WTC11 (cell line): ENCODE measurements at regions of chr16 and their contacts with region 1.

Region 1: GRCh38 chr16:20300312-20301097 is 26.8 kb downstream of the GP2 start:
- DNase-seq: peak; percentile 64
- ATAC-seq: peak; percentile 97
- H3K4me3 Mint-ChIP-seq: no peak overlapping the region
- H3K27ac Mint-ChIP-seq: no peak overlapping the region
- H3K4me1 Mint-ChIP-seq: 0 out of 2 replicates have a peak, but pooled peaks cover 3% of the 10 kb centered on the region
- H3K27me3 Mint-ChIP-seq: no peaks in the 10 kb centered on the region
- CTCF ChIP-seq: peak; percentile 66

Region 2: DNA sequence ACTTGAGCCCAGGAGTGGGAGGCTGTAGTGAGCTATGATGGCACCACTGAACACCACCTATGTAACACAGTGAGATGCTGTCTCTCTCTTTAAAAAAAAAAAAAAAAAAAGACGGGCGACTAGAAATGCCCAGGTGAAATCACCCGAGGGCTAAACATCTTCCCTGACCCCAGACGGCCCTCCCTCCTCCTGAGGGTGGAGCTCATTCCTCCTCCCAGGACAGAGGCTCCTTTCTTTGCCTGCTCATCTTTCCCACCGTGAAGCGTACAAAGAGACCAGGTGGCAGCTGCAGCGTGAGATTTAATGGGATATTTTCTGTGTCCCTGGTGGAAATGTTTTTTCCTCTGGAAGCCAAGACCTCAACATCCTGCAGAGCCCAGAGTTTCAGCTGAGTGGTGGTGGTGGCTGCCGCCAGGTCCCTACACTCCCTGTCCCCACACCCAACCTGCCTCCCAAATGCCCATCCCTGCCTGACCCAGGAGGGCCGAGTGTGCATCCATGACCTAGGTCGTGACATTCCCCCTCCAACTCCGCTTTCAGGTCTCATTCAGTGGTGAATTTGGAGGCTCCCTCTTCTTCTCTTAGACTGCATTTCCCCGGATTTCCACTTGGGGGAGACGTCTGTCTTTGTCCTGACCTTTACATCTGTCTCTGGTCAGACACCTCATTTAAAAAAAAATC is 401.4 kb before region 1 on chr16:
- CTCF ChIA-PET with region 1: interaction called, 20 read pairs
- POLR2A ChIA-PET with region 1: no interaction called
- DNase-seq: peak; percentile 75
- ATAC-seq: peak; percentile 79
- H3K4me3 Mint-ChIP-seq: peak overlapping the region; percentile 45
- H3K27ac Mint-ChIP-seq: no peak overlapping the region
- H3K4me1 Mint-ChIP-seq: peaks cover 16% of the 10 kb centered on the region
- H3K27me3 Mint-ChIP-seq: no peaks in the 10 kb centered on the region
- CTCF ChIP-seq: peak; percentile 75

Region 3: DNA sequence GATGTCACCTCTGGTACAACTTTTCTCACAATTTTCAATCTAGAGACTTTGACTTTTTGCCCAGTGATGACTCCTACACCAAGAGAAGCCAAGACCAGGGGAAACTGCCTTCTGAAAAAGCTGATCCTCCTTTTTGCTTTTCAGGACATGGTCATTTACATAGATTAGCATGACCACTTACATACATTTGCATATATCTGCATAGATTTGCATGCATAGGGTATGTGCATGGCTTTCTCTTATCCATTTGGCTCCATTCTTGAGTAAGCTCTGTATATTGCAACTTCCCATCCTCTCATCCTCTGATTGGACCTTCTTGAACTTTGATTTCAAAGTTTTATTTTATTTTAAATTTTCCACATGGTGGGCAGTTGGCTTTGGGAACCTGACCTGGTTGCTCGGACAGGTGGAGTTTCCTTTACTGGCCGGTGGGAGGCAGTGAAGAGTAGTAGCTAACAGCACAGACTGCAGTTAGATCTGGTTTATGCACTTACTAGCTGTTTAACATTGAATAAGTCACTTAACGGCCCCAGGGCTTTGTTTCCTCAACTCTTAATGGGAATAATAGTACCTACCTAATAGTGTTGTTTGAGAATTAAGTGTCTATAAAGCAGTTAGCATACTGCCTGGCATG is 319.8 kb before region 1 on chr16:
- CTCF ChIA-PET with region 1: interaction called, 29 read pairs
- POLR2A ChIA-PET with region 1: interaction called, 3 read pairs
- DNase-seq: peak; percentile 41
- ATAC-seq: peak; percentile 92
- H3K4me3 Mint-ChIP-seq: no peak overlapping the region
- H3K27ac Mint-ChIP-seq: 0 out of 2 replicates have a peak overlapping the region, but pooled peaks have one; percentile 34
- H3K4me1 Mint-ChIP-seq: peaks cover 30% of the 10 kb centered on the region
- H3K27me3 Mint-ChIP-seq: no peaks in the 10 kb centered on the region
- CTCF ChIP-seq: peak; percentile 46

Region 4: GRCh38 chr16:20004932-20005331 is 295.6 kb before region 1 on chr16:
- CTCF ChIA-PET with region 1: interaction called, 13 read pairs
- POLR2A ChIA-PET with region 1: no interaction called
- DNase-seq: peak; percentile 23
- ATAC-seq: peak; percentile 96
- H3K4me3 Mint-ChIP-seq: no peak overlapping the region
- H3K27ac Mint-ChIP-seq: no peak overlapping the region
- H3K4me1 Mint-ChIP-seq: peaks cover 4% of the 10 kb centered on the region; the same call in 1 of the 2 replicates
- H3K27me3 Mint-ChIP-seq: no peaks in the 10 kb centered on the region
- CTCF ChIP-seq: peak; percentile 28; the same call in 1 of the 2 replicates

Region 5: DNA sequence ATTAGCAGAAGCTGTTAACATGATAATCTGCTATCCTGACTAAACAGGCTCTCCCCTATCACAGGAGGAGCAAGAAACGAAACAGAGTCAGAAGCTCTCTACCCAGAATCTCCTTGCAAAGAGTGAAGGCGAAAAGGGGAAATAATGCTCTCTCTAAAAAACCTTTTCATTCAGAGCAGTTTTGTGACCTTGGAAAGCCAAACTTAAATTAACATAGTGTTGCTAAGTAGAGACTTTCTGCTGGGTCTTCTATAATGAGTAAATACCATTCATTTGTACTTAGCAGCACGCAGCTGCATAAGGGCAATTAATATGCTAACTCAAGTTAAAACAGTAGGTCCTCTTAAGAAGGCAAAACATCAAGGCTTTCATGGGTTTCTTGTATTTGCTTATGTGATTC is 125.1 kb before region 1 on chr16:
- CTCF ChIA-PET with region 1: interaction called, 14 read pairs
- POLR2A ChIA-PET with region 1: no interaction called
- DNase-seq: no peak
- ATAC-seq: peak; percentile 87
- H3K4me3 Mint-ChIP-seq: peak overlapping the region; percentile 41
- H3K27ac Mint-ChIP-seq: peak overlapping the region; percentile 94
- H3K4me1 Mint-ChIP-seq: peaks cover 55% of the 10 kb centered on the region
- H3K27me3 Mint-ChIP-seq: peaks cover 20% of the 10 kb centered on the region
- CTCF ChIP-seq: no peak

Region 6: GRCh38 chr16:20383106-20384029 is 82.9 kb after region 1 on chr16:
- CTCF ChIA-PET with region 1: interaction called, 40 read pairs
- POLR2A ChIA-PET with region 1: interaction called, 3 read pairs
- DNase-seq: peak; percentile 80
- ATAC-seq: peak; percentile 96
- H3K4me3 Mint-ChIP-seq: no peak overlapping the region
- H3K27ac Mint-ChIP-seq: no peak overlapping the region
- H3K4me1 Mint-ChIP-seq: peaks cover 9% of the 10 kb centered on the region
- H3K27me3 Mint-ChIP-seq: no peaks in the 10 kb centered on the region
- CTCF ChIP-seq: peak; percentile 62

Region 7: GRCh38 chr16:20441191-20441590 is 140.7 kb after region 1 on chr16:
- CTCF ChIA-PET with region 1: no interaction called
- POLR2A ChIA-PET with region 1: no interaction called
- DNase-seq: no peak
- ATAC-seq: no peak
- H3K4me3 Mint-ChIP-seq: no peak overlapping the region
- H3K27ac Mint-ChIP-seq: no peak overlapping the region
- H3K4me1 Mint-ChIP-seq: peaks cover 5% of the 10 kb centered on the region; the same call in 1 of the 2 replicates
- H3K27me3 Mint-ChIP-seq: no peaks in the 10 kb centered on the region
- CTCF ChIP-seq: no peak